ENCODE measurements at regions of chr17 and their contacts with region 1.

Region 1: DNA sequence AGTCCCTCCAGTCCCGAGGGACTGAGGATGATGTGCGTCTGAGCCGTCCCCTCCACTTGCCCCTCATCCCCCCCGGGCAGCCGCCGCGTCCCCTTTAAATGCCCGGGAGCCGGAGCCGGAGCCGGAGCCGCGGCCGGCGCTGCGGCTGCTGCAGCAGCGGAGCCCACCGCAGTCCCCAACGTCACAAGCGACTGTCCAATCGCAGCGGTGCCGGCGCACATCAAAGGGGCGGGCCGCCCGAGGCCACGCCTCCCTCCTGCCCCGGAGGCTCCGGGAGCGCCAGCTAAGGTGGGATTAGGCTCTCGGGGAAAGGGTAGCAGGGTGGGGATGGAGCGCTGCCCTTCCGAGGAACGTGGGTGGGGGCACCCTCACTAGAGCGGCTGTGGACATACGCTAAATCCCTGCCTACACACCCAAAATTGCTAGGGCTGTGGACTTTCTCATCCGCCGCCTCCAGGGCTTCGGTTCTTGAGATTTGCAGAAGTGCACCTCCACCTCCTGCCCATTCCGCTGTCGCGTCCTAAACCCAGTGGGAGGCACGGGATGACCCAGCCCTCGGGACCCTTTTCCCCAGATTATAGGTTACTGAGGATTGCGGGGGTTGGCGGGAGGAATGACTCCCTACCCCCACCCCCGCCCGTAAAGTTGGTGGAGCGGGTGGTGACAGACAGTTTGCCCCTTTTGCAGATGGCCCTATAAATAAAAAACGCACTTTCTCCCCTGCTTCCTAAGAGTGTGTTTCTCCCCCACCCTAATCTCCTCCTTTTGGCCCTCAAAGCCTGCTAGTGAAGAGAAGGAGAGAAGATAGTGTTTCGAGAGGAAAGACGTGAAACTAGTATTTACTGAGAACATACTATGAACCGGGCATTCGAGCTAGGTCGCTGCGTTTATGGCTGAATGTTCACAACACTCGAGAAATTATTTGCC is at the start of gene PHOSPHO1:
- DNase-seq: peak; percentile 80 to 91 (median 86)
- ATAC-seq: peak; percentile 92 to 94
- H3K4me3 Mint-ChIP-seq: peak within 1 kb of the TSS; percentile 73 to 94 (median 89)
- H3K27ac Mint-ChIP-seq: peak within 1 kb of the TSS in 8 of 10 donors; percentile 33 to 92 (median 86)
- H3K4me1 Mint-ChIP-seq: peaks cover 8 to 32% (median 24%) of the 10 kb centered on the region in 4 donors
- H3K27me3 Mint-ChIP-seq: peaks cover 0 to 5% (median 0%) of the 10 kb centered on the region in 5 donors
- polyA plus RNA-seq, gene PHOSPHO1: 0.25 to 0.62 (median 0.35) TPM

Region 2: DNA sequence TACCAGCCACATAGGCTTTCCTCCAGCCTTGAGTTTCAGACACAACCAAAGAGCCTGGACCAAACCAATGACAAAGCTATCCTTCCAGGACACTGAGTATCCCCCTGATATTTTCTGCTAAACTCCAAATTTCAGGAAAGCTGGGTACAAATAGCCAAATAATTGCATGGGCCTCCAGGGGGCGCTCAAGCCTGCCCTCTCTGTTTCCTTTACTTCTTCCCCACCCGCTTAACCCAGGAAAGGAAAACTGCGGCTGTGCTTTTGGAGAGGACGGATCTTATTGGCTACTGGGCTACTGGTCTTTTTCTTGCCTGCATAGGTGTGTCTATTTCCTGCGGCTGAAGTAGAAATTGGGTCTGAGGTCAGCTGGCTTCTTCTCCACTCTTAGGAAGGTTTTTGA is 50.6 kb before region 1 on chr17:
- POLR2A ChIA-PET with region 1: interaction called, 20 read pairs
- DNase-seq: peak; percentile 31 to 75 (median 64)
- ATAC-seq: peak; percentile 49 to 64
- H3K4me3 Mint-ChIP-seq: peak overlapping the region in 2 of 10 donors; percentile 34 to 50
- H3K27ac Mint-ChIP-seq: peak overlapping the region in 1 of 10 donors; percentile 80
- H3K4me1 Mint-ChIP-seq: peaks cover 2 to 5% (median 5%) of the 10 kb centered on the region in 4 donors
- H3K27me3 Mint-ChIP-seq: no peaks in the 10 kb centered on the region

Region 3: DNA sequence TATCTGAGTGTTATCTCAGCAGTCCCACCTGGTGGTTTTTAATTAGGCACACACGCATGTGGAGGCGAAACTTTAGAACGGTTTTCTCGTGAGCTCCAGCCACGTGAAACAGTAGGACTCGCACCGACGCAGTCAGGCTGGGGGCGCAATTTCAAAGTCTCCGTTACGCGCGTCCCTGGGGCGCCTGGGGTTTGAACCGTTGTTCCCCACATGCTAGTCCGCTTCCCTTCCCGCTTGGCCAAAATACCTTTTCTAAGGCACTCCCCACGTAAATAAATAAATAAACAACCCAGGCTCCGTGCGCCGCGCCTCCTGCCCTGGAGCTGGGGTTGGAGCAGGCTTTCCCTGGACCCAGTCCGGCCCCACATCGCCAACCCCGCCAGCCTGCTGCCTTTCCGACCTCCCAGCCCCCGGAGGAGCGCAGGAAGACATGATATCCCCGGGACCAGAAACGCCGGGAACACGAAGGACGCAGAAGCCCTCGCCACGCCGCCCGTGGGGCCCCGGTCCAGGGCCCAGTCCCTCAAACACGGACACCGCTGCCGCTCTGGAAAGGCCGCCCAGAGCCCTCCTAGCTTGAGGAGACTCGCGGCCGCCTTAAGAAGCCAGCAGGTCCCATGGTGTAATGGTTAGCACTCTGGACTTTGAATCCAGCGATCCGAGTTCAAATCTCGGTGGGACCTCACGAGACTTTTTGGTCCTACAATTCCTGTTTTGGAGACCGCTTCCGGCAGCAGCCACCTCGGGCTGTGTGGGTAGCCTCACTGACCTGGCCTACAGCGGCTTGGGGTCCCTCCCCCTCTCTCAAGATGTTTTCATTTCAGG is 38.8 kb before region 1 on chr17:
- POLR2A ChIA-PET with region 1: interaction called, 112 read pairs
- DNase-seq: peak; percentile 76 to 99 (median 86)
- ATAC-seq: peak; percentile 56 to 61
- H3K4me3 Mint-ChIP-seq: peak overlapping the region; percentile 90 to 98 (median 94)
- H3K27ac Mint-ChIP-seq: peak overlapping the region; percentile 96 to 100 (median 97)
- H3K4me1 Mint-ChIP-seq: peaks cover 23 to 40% (median 33%) of the 10 kb centered on the region in 4 donors
- H3K27me3 Mint-ChIP-seq: peaks cover 0 to 8% (median 0%) of the 10 kb centered on the region in 5 donors

Region 4: DNA sequence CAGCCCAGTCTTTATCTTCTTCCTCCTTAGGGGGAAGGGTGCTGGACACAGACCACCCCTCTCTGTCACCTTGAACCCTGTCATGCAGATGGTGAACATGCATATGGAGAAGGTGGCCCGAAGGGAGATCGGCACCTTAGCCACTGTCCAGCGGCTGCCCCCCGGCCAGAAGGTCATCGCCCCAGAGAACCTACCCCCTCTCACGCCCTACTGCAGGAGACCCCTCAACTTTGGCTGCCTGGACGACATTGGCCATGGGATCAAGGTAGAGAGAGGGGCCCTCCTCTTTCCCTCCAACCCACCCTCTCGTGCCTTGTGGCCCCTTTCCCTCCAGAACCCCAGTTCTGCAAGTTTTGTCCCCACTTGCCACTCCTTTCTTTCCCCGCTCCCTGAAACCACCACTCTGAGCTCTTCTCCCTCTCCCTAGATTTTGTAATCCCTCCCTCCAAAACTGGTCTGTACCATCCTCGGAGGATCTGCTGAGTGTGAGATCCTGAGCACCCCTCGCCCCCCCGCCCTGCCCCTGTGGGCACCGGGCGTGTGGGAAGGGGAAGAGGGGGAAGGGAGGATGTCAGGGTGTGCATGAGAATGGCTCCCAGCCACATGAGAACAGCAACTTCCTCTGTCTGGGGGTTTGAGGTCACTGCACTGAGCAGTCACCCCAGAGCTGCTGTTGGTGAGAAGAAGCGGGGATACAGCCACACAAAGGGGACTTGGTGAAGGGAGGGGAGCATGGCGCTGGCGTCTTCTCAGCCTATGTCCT is 13.1 kb before region 1 on chr17:
- POLR2A ChIA-PET with region 1: interaction called, 41 read pairs
- DNase-seq: peak; percentile 44 to 90 (median 82)
- ATAC-seq: peak; percentile 81 to 83
- H3K4me3 Mint-ChIP-seq: peak overlapping the region; percentile 72 to 98 (median 86)
- H3K27ac Mint-ChIP-seq: peak overlapping the region; percentile 94 to 100 (median 98)
- H3K4me1 Mint-ChIP-seq: peaks cover 43 to 80% (median 78%) of the 10 kb centered on the region in 4 donors
- H3K27me3 Mint-ChIP-seq: no peaks in the 10 kb centered on the region

Region 5: GRCh38 chr17:49249292-49249794 is 18.4 kb after region 1 on chr17:
- POLR2A ChIA-PET with region 1: no interaction called
- DNase-seq: no peak
- ATAC-seq: no peak
- H3K4me3 Mint-ChIP-seq: no peak overlapping the region
- H3K27ac Mint-ChIP-seq: no peak overlapping the region
- H3K4me1 Mint-ChIP-seq: no peaks in the 10 kb centered on the region
- H3K27me3 Mint-ChIP-seq: peaks cover 0 to 9% (median 0%) of the 10 kb centered on the region in 5 donors